CD4-positive, alpha-beta memory T cell (primary cell): ENCODE measurements at regions of chr16 and their contacts with region 1.

Region 1: GRCh38 chr16:89534252-89534756 is 26.1 kb downstream of the SPG7 start:
- DNase-seq: peak; percentile 52 to 65 (median 61)
- H3K4me3 ChIP-seq: no peak overlapping the region
- H3K4me3 Mint-ChIP-seq: peak overlapping the region; percentile 0 to 78 (median 64)
- H3K27ac ChIP-seq: peak overlapping the region; percentile 1
- H3K27ac Mint-ChIP-seq: peak overlapping the region; percentile 83 to 96 (median 93)
- H3K4me1 ChIP-seq: peaks cover 25% of the 10 kb centered on the region
- H3K4me1 Mint-ChIP-seq: peaks cover 14 to 24% (median 20%) of the 10 kb centered on the region in 4 donors
- H3K27me3 ChIP-seq: no peaks in the 10 kb centered on the region
- H3K27me3 Mint-ChIP-seq: no peaks in the 10 kb centered on the region

Region 2: GRCh38 chr16:89549007-89549700 is 14.8 kb after region 1 on chr16:
- CTCF ChIA-PET with region 1: no interaction called
- POLR2A ChIA-PET with region 1: interaction called, 6 read pairs
- intact Hi-C with region 1: loop called (anchors 2 kb)
- DNase-seq: peak; percentile 46 to 60 (median 54)
- H3K4me3 ChIP-seq: no peak overlapping the region
- H3K4me3 Mint-ChIP-seq: peak overlapping the region; percentile 6 to 72 (median 58)
- H3K27ac ChIP-seq: no peak overlapping the region
- H3K27ac Mint-ChIP-seq: peak overlapping the region; percentile 84 to 93 (median 88)
- H3K4me1 ChIP-seq: peaks cover 16% of the 10 kb centered on the region
- H3K4me1 Mint-ChIP-seq: peaks cover 9 to 14% (median 12%) of the 10 kb centered on the region in 4 donors
- H3K27me3 ChIP-seq: no peaks in the 10 kb centered on the region
- H3K27me3 Mint-ChIP-seq: no peaks in the 10 kb centered on the region

Region 3: GRCh38 chr16:89560378-89561141 is 26.3 kb after region 1 on chr16 and contains the start of gene RPL13:
- CTCF ChIA-PET with region 1: interaction called, 5 read pairs
- POLR2A ChIA-PET with region 1: interaction called, 5 read pairs
- intact Hi-C with region 1: loop called (anchors 1 kb)
- DNase-seq: peak; percentile 91 to 94 (median 93)
- H3K4me3 ChIP-seq: peak within 1 kb of the TSS; percentile 73 to 85
- H3K4me3 Mint-ChIP-seq: peak within 1 kb of the TSS; percentile 95 to 99 (median 98)
- H3K27ac ChIP-seq: peak within 1 kb of the TSS; percentile 88
- H3K27ac Mint-ChIP-seq: peak within 1 kb of the TSS; percentile 97 to 99 (median 98)
- H3K4me1 ChIP-seq: peaks cover 58% of the 10 kb centered on the region
- H3K4me1 Mint-ChIP-seq: peaks cover 32 to 66% (median 50%) of the 10 kb centered on the region in 4 donors
- H3K27me3 ChIP-seq: no peaks in the 10 kb centered on the region
- H3K27me3 Mint-ChIP-seq: no peaks in the 10 kb centered on the region
- total RNA-seq, gene RPL13: 4,825 to 5,043 TPM

Region 4: GRCh38 chr16:89641458-89642119 is 107.3 kb after region 1 on chr16:
- CTCF ChIA-PET with region 1: no interaction called
- POLR2A ChIA-PET with region 1: no interaction called
- intact Hi-C with region 1: loop called (anchors 1 kb)
- DNase-seq: no peak
- H3K4me3 ChIP-seq: no peak overlapping the region
- H3K4me3 Mint-ChIP-seq: peak overlapping the region in 3 of 8 donors; percentile 67 to 78 (median 71)
- H3K27ac ChIP-seq: no peak overlapping the region
- H3K27ac Mint-ChIP-seq: peak overlapping the region in 1 of 7 donors; percentile 33
- H3K4me1 ChIP-seq: peaks cover 7% of the 10 kb centered on the region
- H3K4me1 Mint-ChIP-seq: peaks cover 5 to 10% (median 7%) of the 10 kb centered on the region in 4 donors
- H3K27me3 ChIP-seq: no peaks in the 10 kb centered on the region
- H3K27me3 Mint-ChIP-seq: no peaks in the 10 kb centered on the region